ENCODE measurements at regions of chr11 and their contacts with region 1.

Region 1: GRCh38 chr11:11895672-11896071 is 53.9 kb downstream of the USP47 start:
- DNase-seq: no peak
- H3K4me3 ChIP-seq: no peak overlapping the region
- H3K27ac ChIP-seq: no peak overlapping the region
- H3K4me1 ChIP-seq: no peaks in the 10 kb centered on the region
- H3K27me3 ChIP-seq: no peaks in the 10 kb centered on the region
- CTCF ChIP-seq: peak in 2 of 3 experiments; percentile 10 to 13

Region 2: GRCh38 chr11:11798586-11799438 is 96.9 kb before region 1 on chr11:
- intact Hi-C with region 1: loop called (anchors 5 kb)
- DNase-seq: peak; percentile 51 to 93
- H3K4me3 ChIP-seq: no peak overlapping the region
- H3K27ac ChIP-seq: no peak overlapping the region
- H3K4me1 ChIP-seq: peaks cover 2 to 3% of the 10 kb centered on the region in 2 donors
- H3K27me3 ChIP-seq: no peaks in the 10 kb centered on the region
- CTCF ChIP-seq: peak; percentile 77 to 89 (median 80)

Measured in ascending aorta (tissue), 2 donors.